PC-9 (cell line): ENCODE measurements at regions of chr11 and their contacts with region 1.

Region 1: GRCh38 chr11:45993531-45994001 is 71.1 kb downstream of the LARGE2 start:
- DNase-seq: no peak
- H3K4me3 ChIP-seq: no peak overlapping the region
- H3K27ac ChIP-seq: no peak overlapping the region
- H3K4me1 ChIP-seq: no peaks in the 10 kb centered on the region
- H3K27me3 ChIP-seq: no peaks in the 10 kb centered on the region
- CTCF ChIP-seq: no peak

Region 2: DNA sequence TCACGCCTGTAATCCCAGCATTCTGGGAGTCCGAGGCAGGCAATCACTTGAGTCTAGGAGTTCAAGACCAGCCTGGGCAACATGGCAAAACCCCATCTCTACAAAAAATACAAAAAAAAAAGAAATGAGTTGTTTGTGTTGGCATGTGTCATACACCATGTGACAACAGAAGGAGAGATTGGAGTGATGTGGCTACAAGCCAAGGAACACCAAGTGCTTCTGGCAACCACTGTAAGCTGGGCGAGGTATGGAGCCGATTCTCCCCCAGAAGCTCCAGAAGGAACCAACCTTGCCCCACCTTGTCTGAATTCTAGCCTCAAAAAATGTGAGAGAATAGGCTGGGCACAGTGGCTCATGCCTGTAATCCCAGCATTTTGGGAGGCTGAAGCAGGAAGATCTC is 227.7 kb before region 1 on chr11:
- CTCF ChIA-PET with region 1: no interaction called
- POLR2A ChIA-PET with region 1: no interaction called
- intact Hi-C with region 1: no loop called
- DNase-seq: no peak
- H3K4me3 ChIP-seq: no peak overlapping the region
- H3K27ac ChIP-seq: no peak overlapping the region
- H3K4me1 ChIP-seq: no peaks in the 10 kb centered on the region
- H3K27me3 ChIP-seq: peaks cover 98% of the 10 kb centered on the region
- CTCF ChIP-seq: no peak

Region 3: GRCh38 chr11:46012185-46012584 is 18.6 kb after region 1 on chr11:
- CTCF ChIA-PET with region 1: no interaction called
- POLR2A ChIA-PET with region 1: no interaction called
- intact Hi-C with region 1: no loop called
- DNase-seq: no peak
- H3K4me3 ChIP-seq: no peak overlapping the region
- H3K27ac ChIP-seq: no peak overlapping the region
- H3K4me1 ChIP-seq: no peaks in the 10 kb centered on the region
- H3K27me3 ChIP-seq: no peaks in the 10 kb centered on the region
- CTCF ChIP-seq: no peak

Region 4: DNA sequence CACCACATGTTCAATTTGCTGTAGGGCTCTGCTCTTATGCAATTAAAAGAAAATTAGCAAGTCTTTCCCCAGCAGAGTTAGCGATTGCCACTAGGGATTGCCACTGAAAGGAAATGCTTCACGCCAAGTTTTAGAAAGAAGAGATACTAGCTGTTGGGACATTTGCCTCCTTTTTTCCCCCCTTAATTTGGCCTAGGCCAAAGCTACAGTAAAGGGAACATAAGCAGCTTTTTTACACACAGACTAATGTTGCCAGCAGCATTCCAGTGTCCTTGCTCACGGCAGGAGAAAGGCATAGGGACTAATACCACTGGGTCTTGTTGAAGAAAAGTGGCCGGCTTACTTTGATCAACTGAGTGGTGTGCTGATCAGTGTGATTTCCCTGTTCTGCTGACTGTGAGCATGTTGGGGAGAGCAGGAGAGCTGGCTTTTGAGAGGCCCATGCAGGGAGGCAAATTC is 56.5 kb after region 1 on chr11:
- CTCF ChIA-PET with region 1: no interaction called
- POLR2A ChIA-PET with region 1: no interaction called
- intact Hi-C with region 1: loop called (anchors 10 kb)
- DNase-seq: peak in 1 of 2 experiments; percentile 45
- H3K4me3 ChIP-seq: no peak overlapping the region
- H3K27ac ChIP-seq: no peak overlapping the region
- H3K4me1 ChIP-seq: peaks cover 6% of the 10 kb centered on the region; the same call in 1 of the 2 replicates
- H3K27me3 ChIP-seq: no peaks in the 10 kb centered on the region
- CTCF ChIP-seq: no peak